Caco-2 (cell line): ENCODE measurements at regions of chr6 and their contacts with region 1.

Region 1: GRCh38 chr6:117602151-117602898 is at the start of gene GOPC:
- DNase-seq: peak; percentile 95 to 97
- H3K4me3 ChIP-seq: peak within 1 kb of the TSS; percentile 63
- H3K4me3 Mint-ChIP-seq: peak within 1 kb of the TSS; percentile 96
- H3K27ac Mint-ChIP-seq: peak within 1 kb of the TSS; percentile 94
- H3K4me1 ChIP-seq: peaks cover 7% of the 10 kb centered on the region; the same call in 1 of the 2 replicates
- H3K4me1 Mint-ChIP-seq: no peaks in the 10 kb centered on the region
- H3K27me3 ChIP-seq: no peaks in the 10 kb centered on the region
- H3K27me3 Mint-ChIP-seq: no peaks in the 10 kb centered on the region
- CTCF ChIP-seq: peak; percentile 23 to 45
- total RNA-seq, gene GOPC: 29.0 and 29.6 TPM in 2 replicates

Region 2: GRCh38 chr6:117346142-117346930 is 256.0 kb before region 1 on chr6:
- CTCF ChIA-PET with region 1: no interaction called
- POLR2A ChIA-PET with region 1: no interaction called
- intact Hi-C with region 1: loop called (anchors 1 kb)
- DNase-seq: no peak
- H3K4me3 ChIP-seq: no peak overlapping the region
- H3K4me3 Mint-ChIP-seq: no peak overlapping the region
- H3K27ac Mint-ChIP-seq: no peak overlapping the region
- H3K4me1 ChIP-seq: no peaks in the 10 kb centered on the region
- H3K4me1 Mint-ChIP-seq: no peaks in the 10 kb centered on the region
- H3K27me3 ChIP-seq: no peaks in the 10 kb centered on the region
- H3K27me3 Mint-ChIP-seq: peaks cover 6% of the 10 kb centered on the region
- CTCF ChIP-seq: peak in 1 of 2 experiments; percentile 9

Region 3: GRCh38 chr6:117399924-117400323 is 202.4 kb before region 1 on chr6:
- CTCF ChIA-PET with region 1: no interaction called
- POLR2A ChIA-PET with region 1: no interaction called
- intact Hi-C with region 1: loop called (anchors 1 kb)
- DNase-seq: peak in 1 of 2 experiments; percentile 15
- H3K4me3 ChIP-seq: no peak overlapping the region
- H3K4me3 Mint-ChIP-seq: no peak overlapping the region
- H3K27ac Mint-ChIP-seq: no peak overlapping the region
- H3K4me1 ChIP-seq: no peaks in the 10 kb centered on the region
- H3K4me1 Mint-ChIP-seq: no peaks in the 10 kb centered on the region
- H3K27me3 ChIP-seq: no peaks in the 10 kb centered on the region
- H3K27me3 Mint-ChIP-seq: no peaks in the 10 kb centered on the region
- CTCF ChIP-seq: peak; percentile 29 to 48

Region 4: DNA sequence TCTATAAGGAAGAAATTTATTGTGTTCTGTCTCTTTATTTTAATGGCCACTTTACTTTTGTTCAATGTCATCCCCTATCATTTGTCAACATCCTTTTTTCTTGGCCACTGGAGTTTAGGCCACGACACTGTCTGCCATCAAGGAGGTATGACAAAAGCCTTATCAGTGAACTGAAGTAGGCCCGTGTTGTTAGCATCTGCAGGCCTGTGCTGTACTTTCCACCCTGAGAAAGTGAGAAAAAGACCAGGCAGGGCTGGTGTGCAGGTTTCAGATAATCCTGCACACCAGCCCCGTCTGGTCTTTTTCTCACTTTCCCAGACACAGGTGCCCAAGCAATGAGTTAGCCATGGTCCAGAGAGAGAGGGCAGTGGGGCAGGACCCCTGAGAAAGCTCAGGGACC is 57.6 kb before region 1 on chr6:
- CTCF ChIA-PET with region 1: no interaction called
- POLR2A ChIA-PET with region 1: no interaction called
- intact Hi-C with region 1: no loop called
- DNase-seq: no peak
- H3K4me3 ChIP-seq: no peak overlapping the region
- H3K4me3 Mint-ChIP-seq: no peak overlapping the region
- H3K27ac Mint-ChIP-seq: no peak overlapping the region
- H3K4me1 ChIP-seq: peaks cover 35% of the 10 kb centered on the region
- H3K4me1 Mint-ChIP-seq: peaks cover 35% of the 10 kb centered on the region
- H3K27me3 ChIP-seq: no peaks in the 10 kb centered on the region
- H3K27me3 Mint-ChIP-seq: no peaks in the 10 kb centered on the region
- CTCF ChIP-seq: no peak

Region 5: GRCh38 chr6:117555882-117556498 is 46.3 kb before region 1 on chr6:
- CTCF ChIA-PET with region 1: no interaction called
- POLR2A ChIA-PET with region 1: no interaction called
- intact Hi-C with region 1: loop called (anchors 1 kb)
- DNase-seq: peak in 1 of 2 experiments; percentile 58
- H3K4me3 ChIP-seq: no peak overlapping the region
- H3K4me3 Mint-ChIP-seq: no peak overlapping the region
- H3K27ac Mint-ChIP-seq: no peak overlapping the region
- H3K4me1 ChIP-seq: peaks cover 24% of the 10 kb centered on the region
- H3K4me1 Mint-ChIP-seq: no peaks in the 10 kb centered on the region
- H3K27me3 ChIP-seq: no peaks in the 10 kb centered on the region
- H3K27me3 Mint-ChIP-seq: no peaks in the 10 kb centered on the region
- CTCF ChIP-seq: peak; percentile 60 to 82

Region 6: DNA sequence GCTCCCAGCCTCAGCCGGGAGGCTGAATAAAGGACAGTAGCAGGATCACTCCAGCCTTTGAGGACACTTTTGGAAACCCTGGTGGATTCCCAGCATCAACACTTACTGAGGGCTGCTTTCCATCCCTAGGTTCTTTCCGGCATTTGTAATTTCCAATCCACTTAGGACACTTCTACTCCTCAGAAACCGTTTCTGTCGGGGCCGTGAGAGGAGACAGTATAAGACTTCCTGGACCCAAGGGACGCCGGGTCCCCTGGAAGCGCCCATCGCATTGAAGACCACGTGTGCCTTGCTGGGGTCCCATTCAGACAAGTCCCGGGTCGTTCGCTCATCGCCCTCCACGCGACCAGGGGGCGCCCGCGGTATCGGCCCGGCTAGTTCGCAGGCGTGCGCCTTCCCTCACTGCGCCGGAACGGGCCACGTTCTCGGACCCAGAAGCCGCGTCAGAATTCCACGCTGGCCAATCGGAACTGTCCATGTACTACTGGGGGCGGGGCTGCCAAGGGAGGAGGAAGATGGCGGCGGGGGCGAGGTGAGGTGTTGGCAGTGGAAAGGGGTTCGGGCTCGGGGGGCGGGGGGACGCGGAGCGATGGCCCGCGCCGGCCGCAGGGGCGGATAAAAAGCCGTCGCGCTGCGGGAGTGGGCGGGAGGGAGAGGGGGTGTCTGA is 72.8 kb after region 1 on chr6 and contains the start of gene NUS1:
- CTCF ChIA-PET with region 1: no interaction called
- POLR2A ChIA-PET with region 1: no interaction called
- intact Hi-C with region 1: loop called (anchors 1 kb)
- DNase-seq: peak; percentile 97 to 98
- H3K4me3 ChIP-seq: peak within 1 kb of the TSS; percentile 86
- H3K4me3 Mint-ChIP-seq: peak within 1 kb of the TSS; percentile 80
- H3K27ac Mint-ChIP-seq: peak within 1 kb of the TSS; percentile 88
- H3K4me1 ChIP-seq: peaks cover 6% of the 10 kb centered on the region; the same call in 1 of the 2 replicates
- H3K4me1 Mint-ChIP-seq: peaks cover 21% of the 10 kb centered on the region
- H3K27me3 ChIP-seq: no peaks in the 10 kb centered on the region
- H3K27me3 Mint-ChIP-seq: no peaks in the 10 kb centered on the region
- CTCF ChIP-seq: peak; percentile 67 to 88
- total RNA-seq, gene NUS1: 38.9 and 41.1 TPM in 2 replicates

Region 7: DNA sequence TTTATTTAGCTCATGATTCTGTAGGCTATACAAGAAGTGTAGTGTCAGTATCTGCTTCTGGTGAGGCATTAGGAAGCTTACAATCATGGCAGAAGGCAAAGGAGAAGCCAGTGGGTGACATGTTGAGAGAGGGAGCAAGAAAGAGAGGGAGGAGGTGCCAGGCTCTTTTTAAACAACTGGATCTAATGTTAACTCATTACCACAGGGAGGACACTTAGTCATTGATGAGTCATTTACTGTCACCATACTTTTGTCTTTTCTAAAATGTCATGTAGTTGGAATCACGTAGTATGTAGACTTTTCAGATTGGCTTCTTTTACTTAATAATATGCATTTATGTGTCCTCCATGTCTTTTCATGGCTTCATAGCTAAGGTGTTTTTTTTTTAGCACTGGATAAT is 131.0 kb after region 1 on chr6:
- CTCF ChIA-PET with region 1: no interaction called
- POLR2A ChIA-PET with region 1: no interaction called
- intact Hi-C with region 1: no loop called
- DNase-seq: no peak
- H3K4me3 ChIP-seq: no peak overlapping the region
- H3K4me3 Mint-ChIP-seq: no peak overlapping the region
- H3K27ac Mint-ChIP-seq: no peak overlapping the region
- H3K4me1 ChIP-seq: no peaks in the 10 kb centered on the region
- H3K4me1 Mint-ChIP-seq: no peaks in the 10 kb centered on the region
- H3K27me3 ChIP-seq: no peaks in the 10 kb centered on the region
- H3K27me3 Mint-ChIP-seq: no peaks in the 10 kb centered on the region
- CTCF ChIP-seq: no peak

Region 8: GRCh38 chr6:117776441-117776840 is 174.1 kb after region 1 on chr6:
- CTCF ChIA-PET with region 1: no interaction called
- POLR2A ChIA-PET with region 1: no interaction called
- intact Hi-C with region 1: no loop called
- DNase-seq: no peak
- H3K4me3 ChIP-seq: no peak overlapping the region
- H3K4me3 Mint-ChIP-seq: no peak overlapping the region
- H3K27ac Mint-ChIP-seq: no peak overlapping the region
- H3K4me1 ChIP-seq: no peaks in the 10 kb centered on the region
- H3K4me1 Mint-ChIP-seq: no peaks in the 10 kb centered on the region
- H3K27me3 ChIP-seq: no peaks in the 10 kb centered on the region
- H3K27me3 Mint-ChIP-seq: peaks cover 16% of the 10 kb centered on the region
- CTCF ChIP-seq: peak in 1 of 2 experiments; percentile 47